Heart left ventricle (tissue), 16 donors: ENCODE measurements at regions of chr7 and their contacts with region 1.

Region 1: DNA sequence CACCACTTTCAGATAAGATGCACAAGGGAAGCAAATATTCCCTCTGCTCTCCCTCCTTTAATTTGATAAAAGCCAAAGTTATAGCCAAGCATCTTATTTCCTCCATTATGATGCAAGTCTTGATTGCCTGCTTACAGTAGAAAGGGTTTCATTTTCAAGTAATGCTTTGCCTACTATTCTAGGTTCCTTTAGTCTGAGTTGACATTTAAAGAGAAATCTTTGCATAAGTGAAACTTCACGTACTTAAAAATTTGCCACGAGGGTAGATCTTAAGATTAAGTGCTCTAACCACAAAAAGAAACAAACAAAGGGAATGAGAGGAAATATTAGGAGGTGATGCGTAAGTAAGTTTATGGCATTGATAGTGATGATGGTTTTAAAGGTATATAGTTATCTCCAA is 78.1 kb upstream of the VWDE start:
- DNase-seq: no peak
- ATAC-seq: no peak
- H3K4me3 ChIP-seq: no peak overlapping the region
- H3K27ac ChIP-seq: no peak overlapping the region
- H3K4me1 ChIP-seq: no peaks in the 10 kb centered on the region
- H3K27me3 ChIP-seq: no peaks in the 10 kb centered on the region
- CTCF ChIP-seq: no peak
- POLR2A ChIP-seq: no peak

Region 2: DNA sequence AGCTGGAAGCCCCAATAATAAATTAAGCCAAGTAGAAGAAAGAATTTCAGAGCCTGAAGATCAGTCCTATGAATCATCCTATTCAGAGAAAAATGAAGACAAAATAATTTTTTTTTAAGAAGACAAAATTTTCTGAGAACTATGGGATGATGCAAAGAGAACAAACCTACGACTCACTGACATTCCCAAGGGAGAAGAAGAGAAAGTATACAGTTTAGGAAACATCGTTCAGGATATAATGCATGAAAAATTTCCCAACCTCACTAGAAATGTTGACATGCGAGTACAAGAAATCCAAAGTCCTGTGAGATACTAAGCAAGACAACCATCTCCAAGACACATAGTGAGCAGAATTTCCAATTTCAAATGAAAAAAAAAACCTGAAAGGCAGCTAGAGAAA is 800.3 kb before region 1 on chr7:
- intact Hi-C with region 1: no loop called
- DNase-seq: no peak
- ATAC-seq: no peak
- H3K4me3 ChIP-seq: no peak overlapping the region
- H3K27ac ChIP-seq: no peak overlapping the region
- H3K4me1 ChIP-seq: no peaks in the 10 kb centered on the region
- H3K27me3 ChIP-seq: no peaks in the 10 kb centered on the region
- CTCF ChIP-seq: no peak
- POLR2A ChIP-seq: no peak

Region 3: DNA sequence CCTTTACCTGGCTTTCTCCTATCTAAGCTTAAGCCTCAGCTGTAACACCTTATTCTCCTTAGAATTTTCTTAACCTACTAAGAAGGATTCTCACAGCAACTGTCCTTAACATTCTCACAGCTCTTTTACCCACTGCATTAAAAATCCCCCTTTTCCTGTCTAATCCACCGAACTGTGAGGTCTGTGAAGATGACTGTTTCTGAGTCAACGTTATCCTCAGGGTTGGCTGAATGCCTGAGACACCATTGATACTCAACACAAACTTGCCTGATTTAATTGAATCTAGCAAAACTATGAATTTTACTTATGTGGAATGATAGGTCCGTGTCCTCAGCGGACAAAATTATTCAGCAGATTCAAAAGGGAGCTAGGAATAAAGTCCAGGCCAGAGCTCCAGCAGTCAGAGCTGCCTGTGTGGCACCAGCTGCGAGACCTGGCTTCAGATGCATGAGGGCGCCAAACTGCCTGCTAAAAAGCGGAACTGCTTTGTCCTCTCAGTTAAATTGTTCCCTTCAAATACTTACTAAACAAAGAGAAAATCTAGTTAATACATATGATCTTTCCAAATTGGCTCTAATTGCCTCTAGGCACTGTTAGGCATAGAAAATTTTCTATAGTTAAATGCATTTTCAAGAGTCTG is 44.7 kb before region 1 on chr7:
- intact Hi-C with region 1: loop called in 2 of 10 experiments (anchors 10 kb)
- DNase-seq: no peak
- ATAC-seq: no peak
- H3K4me3 ChIP-seq: no peak overlapping the region
- H3K27ac ChIP-seq: no peak overlapping the region
- H3K4me1 ChIP-seq: no peaks in the 10 kb centered on the region
- H3K27me3 ChIP-seq: peaks cover 0 to 3% (median 0%) of the 10 kb centered on the region in 9 donors
- CTCF ChIP-seq: no peak
- POLR2A ChIP-seq: no peak

Region 4: GRCh38 chr7:12493407-12493806 is 11.7 kb after region 1 on chr7:
- intact Hi-C with region 1: no loop called
- DNase-seq: no peak
- ATAC-seq: no peak
- H3K4me3 ChIP-seq: no peak overlapping the region
- H3K27ac ChIP-seq: no peak overlapping the region
- H3K4me1 ChIP-seq: no peaks in the 10 kb centered on the region
- H3K27me3 ChIP-seq: no peaks in the 10 kb centered on the region
- CTCF ChIP-seq: no peak
- POLR2A ChIP-seq: no peak